Left lung (tissue), 14 donors: ENCODE measurements at regions of chr10 and their contacts with region 1.

Region 1: GRCh38 chr10:128763588-128763987 is 637.4 kb upstream of the MKI67 start:
- DNase-seq: no peak
- ATAC-seq: no peak
- H3K4me3 ChIP-seq: no peak overlapping the region
- H3K27ac ChIP-seq: no peak overlapping the region
- H3K4me1 ChIP-seq: no peaks in the 10 kb centered on the region
- H3K27me3 ChIP-seq: no peaks in the 10 kb centered on the region
- CTCF ChIP-seq: no peak

Region 2: DNA sequence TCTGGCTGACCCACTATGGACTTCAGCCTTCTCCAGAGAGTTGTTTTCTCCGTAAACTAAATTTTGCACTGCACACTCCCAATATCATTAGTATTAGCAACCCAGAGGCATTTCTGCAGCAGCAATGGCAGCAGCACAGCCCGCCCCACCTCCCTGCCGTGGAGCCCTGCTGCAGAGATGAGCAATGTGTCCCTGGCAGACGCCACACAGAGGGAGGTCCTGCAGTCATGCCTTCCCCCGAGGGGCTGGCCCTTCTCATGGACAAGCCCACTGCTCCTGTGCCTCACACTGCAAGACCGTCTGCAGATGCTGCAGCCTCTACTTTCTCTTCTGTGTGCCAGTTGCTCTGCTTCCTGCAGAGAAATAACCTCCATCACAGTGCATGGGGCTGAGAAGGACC is 244.0 kb before region 1 on chr10:
- intact Hi-C with region 1: no loop called
- DNase-seq: no peak
- ATAC-seq: no peak
- H3K4me3 ChIP-seq: no peak overlapping the region
- H3K27ac ChIP-seq: no peak overlapping the region
- H3K4me1 ChIP-seq: no peaks in the 10 kb centered on the region
- H3K27me3 ChIP-seq: peaks cover 0 to 17% of the 10 kb centered on the region in 2 donors
- CTCF ChIP-seq: no peak

Region 3: DNA sequence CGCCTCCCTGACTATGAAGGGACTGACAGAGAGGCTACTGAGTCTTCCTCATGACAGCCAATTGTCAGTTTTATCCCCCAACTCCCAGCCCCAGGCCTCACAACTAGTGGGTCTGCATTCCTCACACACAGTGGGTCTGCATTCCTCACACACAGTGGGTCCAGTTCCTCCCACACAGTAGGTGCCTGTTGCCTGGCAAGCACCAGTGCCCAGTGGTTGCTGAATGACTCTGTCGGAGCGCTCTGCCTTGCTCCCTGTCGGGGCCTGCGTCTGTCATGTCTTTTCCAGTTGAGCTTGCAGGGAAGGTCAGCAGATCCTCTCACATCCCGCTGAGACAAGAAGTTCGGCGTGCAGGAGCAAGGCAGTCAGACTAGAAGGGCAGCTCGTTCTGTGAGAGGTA is 47.4 kb before region 1 on chr10:
- intact Hi-C with region 1: loop called in 1 of 2 experiments (anchors 2 kb)
- DNase-seq: no peak
- ATAC-seq: no peak
- H3K4me3 ChIP-seq: no peak overlapping the region
- H3K27ac ChIP-seq: no peak overlapping the region
- H3K4me1 ChIP-seq: no peaks in the 10 kb centered on the region
- H3K27me3 ChIP-seq: peaks cover 0 to 17% of the 10 kb centered on the region in 2 donors
- CTCF ChIP-seq: no peak